Activated T-helper 2 cell treated with anti-CD3 and anti-CD28 coated beads, Interferon-gamma antibody, Interleukin-2, Interleukin-4, amounts not matched to agents 10 μg/mL and 5 μg/mL and 100 μg/mL, durations not matched to agents 14 hours and 24 hours and 36 hours (primary cell): ENCODE measurements at regions of chr11 and their contacts with region 1.

Region 1: GRCh38 chr11:114166897-114167323 is 107.4 kb downstream of the ZBTB16 start:
- DNase-seq: no peak
- H3K4me3 Mint-ChIP-seq: peak overlapping the region; percentile 11
- H3K27ac Mint-ChIP-seq: peak overlapping the region; percentile 48
- H3K4me1 Mint-ChIP-seq: peaks cover 64% of the 10 kb centered on the region
- H3K27me3 Mint-ChIP-seq: no peaks in the 10 kb centered on the region

Region 2: DNA sequence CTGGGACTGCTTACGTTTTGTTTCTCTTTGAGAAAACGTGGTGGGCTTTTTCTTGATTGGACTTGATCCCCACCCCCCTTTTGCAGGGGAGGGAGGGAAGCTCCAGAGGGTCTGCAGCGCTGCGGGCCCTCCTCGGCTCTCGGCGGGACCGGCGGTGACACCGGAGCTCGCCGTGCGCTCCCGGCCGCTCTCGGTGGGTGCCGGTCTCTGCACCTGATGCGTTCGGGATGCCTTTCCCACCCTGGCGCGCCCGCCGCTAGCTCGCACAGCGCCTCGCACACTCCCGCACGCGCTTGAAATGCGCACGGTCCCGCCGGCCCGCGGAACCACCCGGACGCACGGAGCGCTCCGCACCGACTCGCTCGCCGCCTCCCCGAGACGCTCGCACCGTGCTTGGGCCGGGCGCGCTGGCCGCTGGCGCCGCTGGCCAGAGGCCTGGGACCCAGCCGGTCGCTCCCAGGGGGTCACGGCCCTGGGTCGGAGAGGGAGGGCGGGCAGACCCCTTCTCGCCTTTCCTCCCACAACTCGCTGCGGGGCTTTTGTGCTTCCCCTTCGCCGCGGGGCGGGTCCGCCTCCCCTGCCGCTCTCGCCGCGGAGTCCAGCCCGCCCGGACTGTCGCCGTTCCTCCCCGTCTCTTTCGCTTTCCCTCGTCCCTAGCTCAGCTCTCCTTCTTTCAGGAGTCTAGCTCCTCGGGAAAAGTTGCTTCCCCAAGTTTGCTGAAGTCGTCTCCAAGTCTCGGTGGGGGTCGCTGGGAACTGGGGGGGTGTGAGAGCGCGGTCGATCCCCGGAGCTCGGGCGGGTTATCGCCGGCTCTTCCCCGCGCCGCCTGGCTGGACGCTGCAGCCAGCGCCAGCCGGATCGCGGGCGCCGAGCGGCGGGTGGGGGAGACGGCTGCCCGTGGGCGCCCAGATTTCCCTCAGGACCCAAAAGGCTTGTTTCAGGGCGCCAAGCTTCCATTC is 106.2 kb before region 1 on chr11:
- intact Hi-C with region 1: loop called (anchors 5 kb)
- DNase-seq: no peak
- H3K4me3 Mint-ChIP-seq: peak overlapping the region; percentile 81
- H3K27ac Mint-ChIP-seq: no peak overlapping the region
- H3K4me1 Mint-ChIP-seq: peaks cover 11% of the 10 kb centered on the region
- H3K27me3 Mint-ChIP-seq: peaks cover 73% of the 10 kb centered on the region

Region 3: GRCh38 chr11:114425921-114426679 is 259.2 kb after region 1 on chr11:
- intact Hi-C with region 1: no loop called
- DNase-seq: no peak
- H3K4me3 Mint-ChIP-seq: no peak overlapping the region
- H3K27ac Mint-ChIP-seq: no peak overlapping the region
- H3K4me1 Mint-ChIP-seq: peaks cover 7% of the 10 kb centered on the region
- H3K27me3 Mint-ChIP-seq: no peaks in the 10 kb centered on the region